ENCODE measurements at regions of chr6 and their contacts with region 1.

Region 1: GRCh38 chr6:129251669-129252376 is 368.9 kb downstream of the LAMA2 start:
- DNase-seq: peak; percentile 77
- H3K4me3 Mint-ChIP-seq: no peak overlapping the region
- H3K27ac Mint-ChIP-seq: no peak overlapping the region
- H3K4me1 Mint-ChIP-seq: no peaks in the 10 kb centered on the region
- H3K27me3 Mint-ChIP-seq: peaks cover 67% of the 10 kb centered on the region
- CTCF ChIP-seq: peak; percentile 88

Region 2: DNA sequence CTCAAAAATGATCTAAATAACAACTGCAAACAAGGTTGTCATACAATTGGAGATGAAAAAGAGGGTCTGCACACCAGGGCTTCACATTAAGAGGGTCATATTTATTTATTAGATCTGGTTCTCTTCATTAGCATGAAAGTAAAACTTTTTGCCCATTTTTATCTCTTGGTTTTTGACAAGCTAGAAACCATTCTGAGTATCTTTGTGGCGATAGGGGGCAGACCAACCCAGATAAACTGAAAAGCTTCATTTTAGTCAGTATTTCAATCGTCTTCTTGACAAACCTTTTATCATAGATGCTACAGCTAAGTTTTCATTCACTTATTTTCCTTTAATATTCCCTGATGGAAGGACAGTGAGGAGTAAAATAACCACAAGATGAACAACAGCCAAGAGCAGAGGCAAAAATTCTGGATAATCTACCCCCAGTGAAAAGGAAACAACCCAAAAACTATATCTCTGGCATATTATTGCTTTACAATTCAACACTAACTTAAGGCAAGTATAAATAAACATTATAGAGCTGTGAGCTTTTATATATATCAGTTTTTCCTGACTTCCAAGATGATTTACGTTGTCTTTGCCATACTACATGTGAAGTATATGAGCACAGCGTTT is 1396.2 kb before region 1 on chr6:
- CTCF ChIA-PET with region 1: interaction called, 3 read pairs
- POLR2A ChIA-PET with region 1: no interaction called
- intact Hi-C with region 1: loop called (anchors 5 kb)
- DNase-seq: peak; percentile 35
- H3K4me3 Mint-ChIP-seq: no peak overlapping the region
- H3K27ac Mint-ChIP-seq: no peak overlapping the region
- H3K4me1 Mint-ChIP-seq: no peaks in the 10 kb centered on the region
- H3K27me3 Mint-ChIP-seq: no peaks in the 10 kb centered on the region
- CTCF ChIP-seq: peak; percentile 40

Region 3: GRCh38 chr6:128731249-128732165 is 520.3 kb before region 1 on chr6:
- CTCF ChIA-PET with region 1: interaction called, 5 read pairs
- POLR2A ChIA-PET with region 1: no interaction called
- intact Hi-C with region 1: loop called (anchors 2 kb)
- DNase-seq: peak; percentile 64
- H3K4me3 Mint-ChIP-seq: no peak overlapping the region
- H3K27ac Mint-ChIP-seq: no peak overlapping the region
- H3K4me1 Mint-ChIP-seq: no peaks in the 10 kb centered on the region
- H3K27me3 Mint-ChIP-seq: no peaks in the 10 kb centered on the region
- CTCF ChIP-seq: peak; percentile 72

Region 4: GRCh38 chr6:129239825-129240491 is 11.9 kb before region 1 on chr6:
- CTCF ChIA-PET with region 1: interaction called, 15 read pairs
- POLR2A ChIA-PET with region 1: no interaction called
- intact Hi-C with region 1: no loop called
- DNase-seq: peak; percentile 5
- H3K4me3 Mint-ChIP-seq: no peak overlapping the region
- H3K27ac Mint-ChIP-seq: no peak overlapping the region
- H3K4me1 Mint-ChIP-seq: peaks cover 5% of the 10 kb centered on the region
- H3K27me3 Mint-ChIP-seq: peaks cover 12% of the 10 kb centered on the region
- CTCF ChIP-seq: no peak

Region 5: DNA sequence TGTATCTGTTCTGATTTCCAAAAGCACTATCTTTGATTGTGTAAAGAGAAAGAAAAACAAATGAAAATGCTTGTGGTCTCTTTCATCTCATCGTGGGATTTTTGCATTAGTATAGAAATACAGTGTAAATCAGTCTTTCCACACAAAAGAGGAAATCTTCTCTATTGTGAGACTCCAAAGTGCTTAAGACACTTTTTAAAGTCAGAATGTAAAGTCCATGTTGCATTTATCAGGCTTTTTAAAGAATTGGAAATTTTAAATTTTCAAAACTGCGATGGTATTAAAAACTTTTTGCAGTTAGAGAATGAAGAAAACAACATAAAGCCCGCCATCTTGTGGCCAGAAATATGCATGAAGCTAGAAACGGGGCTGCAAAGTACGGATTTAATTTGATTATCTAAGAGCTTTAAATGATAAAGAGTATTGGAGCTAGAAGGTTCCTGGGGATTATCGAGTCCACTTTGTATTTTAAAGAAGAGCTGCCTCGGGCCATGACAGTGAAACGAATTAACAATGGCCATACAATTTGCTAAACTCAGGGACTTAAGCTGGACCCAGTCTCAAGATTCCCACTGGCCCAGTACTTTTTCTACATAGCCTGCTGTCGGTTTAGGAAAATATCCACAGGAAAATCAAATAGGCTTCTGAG is 118.6 kb after region 1 on chr6:
- CTCF ChIA-PET with region 1: interaction called, 7 read pairs
- POLR2A ChIA-PET with region 1: interaction called, 3 read pairs
- intact Hi-C with region 1: loop called (anchors 5 kb)
- DNase-seq: peak; percentile 66
- H3K4me3 Mint-ChIP-seq: no peak overlapping the region
- H3K27ac Mint-ChIP-seq: no peak overlapping the region
- H3K4me1 Mint-ChIP-seq: no peaks in the 10 kb centered on the region
- H3K27me3 Mint-ChIP-seq: no peaks in the 10 kb centered on the region
- CTCF ChIP-seq: peak; percentile 75

Measured in MCF 10A (cell line).